Activated T-helper 2 cell treated with anti-CD3 and anti-CD28 coated beads, Interferon-gamma antibody, Interleukin-2, Interleukin-4, amounts not matched to agents 10 μg/mL and 5 μg/mL and 100 μg/mL, durations not matched to agents 14 hours and 24 hours and 36 hours (primary cell): ENCODE measurements at regions of chr14 and their contacts with region 1.

Region 1: GRCh38 chr14:100067971-100068959 is 3.0 kb downstream of the EVL start:
- DNase-seq: peak; percentile 89
- H3K4me3 Mint-ChIP-seq: peak overlapping the region; percentile 85
- H3K27ac Mint-ChIP-seq: peak overlapping the region; percentile 99
- H3K4me1 Mint-ChIP-seq: peaks cover 79% of the 10 kb centered on the region
- H3K27me3 Mint-ChIP-seq: no peaks in the 10 kb centered on the region

Region 2: GRCh38 chr14:98182393-98183055 is 1885.7 kb before region 1 on chr14:
- intact Hi-C with region 1: loop called (anchors 5 kb)
- DNase-seq: no peak
- H3K4me3 Mint-ChIP-seq: peak overlapping the region; percentile 26
- H3K27ac Mint-ChIP-seq: peak overlapping the region; percentile 94
- H3K4me1 Mint-ChIP-seq: peaks cover 84% of the 10 kb centered on the region
- H3K27me3 Mint-ChIP-seq: no peaks in the 10 kb centered on the region

Region 3: GRCh38 chr14:99480917-99481744 is 587.1 kb before region 1 on chr14 and contains the start of gene CCNK:
- intact Hi-C with region 1: loop called (anchors 10 kb)
- DNase-seq: peak; percentile 100
- H3K4me3 Mint-ChIP-seq: peak within 1 kb of the TSS; percentile 90
- H3K27ac Mint-ChIP-seq: peak within 1 kb of the TSS; percentile 92
- H3K4me1 Mint-ChIP-seq: peaks cover 43% of the 10 kb centered on the region
- H3K27me3 Mint-ChIP-seq: no peaks in the 10 kb centered on the region
- total RNA-seq, gene CCNK: 77.8 and 80.4 TPM in 2 replicates

Region 4: DNA sequence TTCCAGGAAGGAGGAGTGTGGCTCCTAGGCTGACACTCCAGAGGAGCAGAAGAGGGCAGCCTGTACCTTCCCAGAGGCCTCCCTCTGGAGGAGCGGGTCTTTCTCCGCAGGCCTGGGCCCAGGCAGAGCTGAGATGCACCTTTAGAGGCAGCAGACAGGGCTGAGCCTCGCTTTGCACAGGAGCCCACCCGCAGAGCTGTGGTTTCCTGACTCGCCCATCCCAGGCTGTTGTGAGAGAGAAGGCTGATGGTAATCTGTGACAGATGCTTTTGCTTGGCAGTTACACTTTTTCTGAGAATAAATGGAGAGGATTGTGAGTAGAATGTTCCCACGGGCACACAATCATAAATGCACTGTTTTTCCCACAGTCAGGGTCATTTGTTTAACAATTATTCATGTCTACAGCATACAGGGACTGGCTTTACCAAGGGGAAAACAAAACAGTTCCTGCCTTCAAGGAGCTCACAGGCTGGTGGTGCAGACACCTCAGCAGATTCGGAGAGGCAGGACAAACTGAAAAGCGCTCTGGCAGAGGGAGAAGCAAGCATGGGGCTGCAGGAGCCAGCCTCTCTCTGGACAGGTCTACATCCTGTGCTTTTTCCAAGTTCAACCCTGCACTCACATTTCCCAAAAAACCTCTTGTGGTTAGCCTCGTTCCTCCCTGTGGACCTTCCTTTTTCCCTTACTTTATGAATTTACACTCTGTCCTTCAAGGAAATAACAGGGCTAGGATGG is 10.9 kb after region 1 on chr14:
- intact Hi-C with region 1: loop called (anchors 1 kb)
- DNase-seq: peak; percentile 85
- H3K4me3 Mint-ChIP-seq: peak overlapping the region; percentile 69
- H3K27ac Mint-ChIP-seq: peak overlapping the region; percentile 95
- H3K4me1 Mint-ChIP-seq: peaks cover 92% of the 10 kb centered on the region
- H3K27me3 Mint-ChIP-seq: no peaks in the 10 kb centered on the region

Region 5: GRCh38 chr14:100192672-100193416 is 124.6 kb after region 1 on chr14:
- intact Hi-C with region 1: loop called (anchors 2 kb)
- DNase-seq: peak; percentile 100
- H3K4me3 Mint-ChIP-seq: peak overlapping the region; percentile 64
- H3K27ac Mint-ChIP-seq: peak overlapping the region; percentile 84
- H3K4me1 Mint-ChIP-seq: peaks cover 9% of the 10 kb centered on the region
- H3K27me3 Mint-ChIP-seq: no peaks in the 10 kb centered on the region

Region 6: GRCh38 chr14:100375963-100376735 is 307.9 kb after region 1 on chr14:
- intact Hi-C with region 1: loop called (anchors 2 kb)
- DNase-seq: peak; percentile 92
- H3K4me3 Mint-ChIP-seq: peak within 1 kb of the TSS; percentile 95
- H3K27ac Mint-ChIP-seq: peak within 1 kb of the TSS; percentile 99
- H3K4me1 Mint-ChIP-seq: peaks cover 45% of the 10 kb centered on the region
- H3K27me3 Mint-ChIP-seq: no peaks in the 10 kb centered on the region